ENCODE measurements at regions of chrX and their contacts with region 1.

Region 1: GRCh38 chrX:12497832-12498591 is 293.2 kb upstream of the PRPS2 start:
- DNase-seq: no peak
- H3K4me3 ChIP-seq: no peak overlapping the region
- H3K27ac ChIP-seq: no peak overlapping the region
- H3K4me1 ChIP-seq: no peaks in the 10 kb centered on the region
- H3K27me3 ChIP-seq: no peaks in the 10 kb centered on the region
- CTCF ChIP-seq: peak; percentile 22

Region 2: DNA sequence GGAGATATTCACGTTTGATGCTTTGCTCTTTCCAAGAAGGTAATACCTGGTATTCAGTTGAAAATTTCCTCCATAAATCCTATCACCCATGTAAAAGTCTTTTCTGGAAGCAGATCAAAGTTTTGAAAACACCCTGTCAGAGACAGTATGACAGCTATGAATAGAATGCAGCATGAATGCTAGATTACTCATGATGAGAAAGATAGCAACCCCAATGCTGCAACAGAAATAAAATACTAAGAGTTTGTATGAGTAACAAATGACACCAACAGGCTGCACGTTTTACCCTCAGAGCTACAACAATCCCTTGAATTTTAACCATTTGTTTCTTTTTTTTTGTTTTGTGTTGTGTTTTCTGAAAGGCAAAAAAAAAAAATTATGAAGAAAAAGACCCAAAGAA is 940.9 kb before region 1 on chrX:
- intact Hi-C with region 1: no loop called
- DNase-seq: no peak
- H3K4me3 ChIP-seq: no peak overlapping the region
- H3K27ac ChIP-seq: no peak overlapping the region
- H3K4me1 ChIP-seq: no peaks in the 10 kb centered on the region
- H3K27me3 ChIP-seq: no peaks in the 10 kb centered on the region
- CTCF ChIP-seq: no peak

Region 3: DNA sequence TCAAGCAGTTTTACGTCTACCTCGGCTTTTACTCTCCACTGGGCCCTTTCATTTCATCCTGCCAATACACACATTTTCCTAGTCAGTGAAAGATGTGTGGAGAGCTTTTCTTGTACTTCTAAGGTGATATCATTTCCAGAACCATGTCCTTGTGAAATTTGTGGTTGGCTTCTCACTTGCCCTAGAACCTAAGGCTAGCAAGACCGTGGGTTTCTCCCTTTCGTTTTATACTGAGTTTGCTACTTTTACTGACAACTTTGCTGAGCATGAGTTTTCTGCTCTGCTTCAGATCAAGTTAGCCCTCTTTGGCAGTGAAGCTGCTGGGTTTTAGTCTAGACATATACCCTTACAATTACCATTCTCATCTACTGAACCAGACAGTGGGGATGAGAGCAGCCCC is 455.4 kb before region 1 on chrX:
- intact Hi-C with region 1: no loop called
- DNase-seq: no peak
- H3K4me3 ChIP-seq: no peak overlapping the region
- H3K27ac ChIP-seq: no peak overlapping the region
- H3K4me1 ChIP-seq: no peaks in the 10 kb centered on the region
- H3K27me3 ChIP-seq: no peaks in the 10 kb centered on the region
- CTCF ChIP-seq: no peak

Region 4: DNA sequence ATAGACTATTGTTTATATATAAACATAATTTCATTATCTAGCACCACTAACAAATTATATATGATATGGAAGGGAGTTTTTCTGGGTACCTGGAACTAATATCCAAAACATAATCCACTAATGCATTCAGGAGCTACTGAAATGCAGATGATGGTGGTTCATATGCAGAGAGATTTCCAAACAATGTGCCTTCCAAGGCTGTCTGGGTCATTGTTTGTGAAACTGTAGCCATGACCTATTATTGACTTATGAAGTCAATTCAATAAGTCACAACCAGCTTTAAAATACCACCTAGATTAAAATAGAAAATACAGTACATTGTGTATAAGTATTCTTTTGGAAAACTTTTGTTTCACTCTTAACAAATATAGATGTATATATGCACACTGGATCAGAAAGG is 56.2 kb after region 1 on chrX:
- intact Hi-C with region 1: loop called (anchors 10 kb)
- DNase-seq: no peak
- H3K4me3 ChIP-seq: no peak overlapping the region
- H3K27ac ChIP-seq: no peak overlapping the region
- H3K4me1 ChIP-seq: no peaks in the 10 kb centered on the region
- H3K27me3 ChIP-seq: no peaks in the 10 kb centered on the region
- CTCF ChIP-seq: no peak

Region 5: DNA sequence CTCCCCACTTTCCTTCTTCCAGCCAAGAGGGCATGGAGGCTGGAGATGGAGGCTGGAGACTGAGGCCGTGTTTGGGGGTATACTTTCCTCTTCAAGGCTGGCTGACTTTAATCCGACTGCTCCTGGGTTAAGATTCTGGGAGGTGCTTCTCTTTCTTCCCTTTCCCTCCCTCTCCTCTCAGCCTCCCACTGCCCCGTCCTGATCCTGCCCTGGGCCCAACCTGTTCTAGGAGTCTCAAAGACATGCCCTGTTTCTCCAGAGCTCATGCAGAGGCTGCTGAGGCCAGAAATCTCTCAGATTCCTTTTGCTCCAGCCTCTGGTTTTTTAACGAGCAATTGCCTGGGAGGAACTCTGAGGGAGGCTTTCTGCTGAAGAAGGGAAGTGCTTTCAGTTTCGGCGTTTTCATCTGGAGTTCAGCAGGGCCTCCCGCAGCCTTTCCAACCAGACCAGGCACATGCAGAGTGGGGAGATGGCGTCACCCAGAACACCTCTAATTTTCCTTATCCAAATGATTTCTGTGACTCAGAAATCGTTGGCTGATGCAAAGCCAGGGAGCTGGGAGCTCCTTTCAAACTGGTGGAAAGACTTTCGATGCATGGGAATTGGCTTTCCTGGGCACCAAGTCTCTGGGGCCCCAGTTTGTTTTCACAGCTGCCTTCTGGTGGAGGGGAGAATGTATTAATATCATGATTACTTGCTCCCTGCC is 580.9 kb after region 1 on chrX:
- intact Hi-C with region 1: no loop called
- DNase-seq: peak; percentile 54
- H3K4me3 ChIP-seq: no peak overlapping the region
- H3K27ac ChIP-seq: peak overlapping the region; percentile 71
- H3K4me1 ChIP-seq: no peaks in the 10 kb centered on the region
- H3K27me3 ChIP-seq: no peaks in the 10 kb centered on the region
- CTCF ChIP-seq: no peak